ENCODE measurements at regions of chr14 and their contacts with region 1.

Region 1: GRCh38 chr14:68466491-68467032 is 326.3 kb downstream of the ZFP36L1 start:
- DNase-seq: no peak
- H3K4me3 Mint-ChIP-seq: no peak overlapping the region
- H3K27ac Mint-ChIP-seq: no peak overlapping the region
- H3K4me1 Mint-ChIP-seq: peaks cover 33% of the 10 kb centered on the region
- H3K27me3 Mint-ChIP-seq: no peaks in the 10 kb centered on the region

Region 2: DNA sequence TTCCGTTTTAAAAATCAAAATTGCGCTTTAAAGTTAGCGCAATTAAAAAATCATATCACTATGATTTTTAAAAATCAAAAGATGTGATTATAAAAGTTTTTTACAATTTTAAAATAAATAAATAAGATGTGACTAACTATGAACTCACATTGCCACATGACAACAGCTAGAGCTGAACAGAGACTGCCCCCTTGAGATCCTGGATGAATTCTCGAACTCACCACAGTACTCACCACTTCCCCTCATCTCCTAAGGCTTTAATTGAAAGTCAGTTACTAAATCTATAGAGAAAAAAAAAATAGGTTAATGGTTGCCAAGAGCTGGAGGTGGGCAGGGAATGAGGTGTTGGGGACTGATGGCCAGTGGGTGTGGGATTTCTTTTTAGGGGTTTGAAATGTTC is 57.9 kb before region 1 on chr14:
- intact Hi-C with region 1: loop called (anchors 10 kb)
- DNase-seq: no peak
- H3K4me3 Mint-ChIP-seq: no peak overlapping the region
- H3K27ac Mint-ChIP-seq: no peak overlapping the region
- H3K4me1 Mint-ChIP-seq: peaks cover 34% of the 10 kb centered on the region
- H3K27me3 Mint-ChIP-seq: no peaks in the 10 kb centered on the region

Region 3: DNA sequence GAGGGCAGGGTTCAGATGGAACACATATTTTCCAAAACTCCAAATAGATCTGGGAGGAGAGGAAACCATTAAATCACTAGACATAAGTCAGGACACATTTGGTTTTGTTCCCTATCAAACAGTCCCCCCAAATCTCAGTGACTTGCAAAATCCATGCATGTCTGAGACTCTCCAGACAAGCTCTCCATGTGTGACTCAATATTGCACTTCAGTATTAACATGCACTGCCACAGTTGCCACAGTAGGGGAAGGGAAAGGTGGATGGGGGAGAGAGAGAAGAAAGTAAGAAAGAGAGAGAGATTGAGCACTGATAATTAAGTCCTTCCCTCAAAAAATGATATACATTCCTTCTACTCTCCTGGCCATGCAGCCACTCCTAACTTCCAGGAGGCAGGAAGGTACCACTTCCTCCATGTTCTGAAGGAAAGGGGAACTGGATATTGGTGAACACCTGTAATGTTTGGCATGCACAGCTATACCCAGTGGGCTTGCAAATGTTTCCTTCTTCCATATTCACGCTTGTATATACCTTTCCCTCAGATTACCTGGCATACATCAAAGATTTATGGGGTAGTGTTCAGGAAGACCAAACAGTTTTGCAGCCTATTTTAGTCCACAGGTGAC is 16.3 kb after region 1 on chr14:
- intact Hi-C with region 1: loop called (anchors 1 kb)
- DNase-seq: no peak
- H3K4me3 Mint-ChIP-seq: no peak overlapping the region
- H3K27ac Mint-ChIP-seq: peak overlapping the region; percentile 71
- H3K4me1 Mint-ChIP-seq: peaks cover 34% of the 10 kb centered on the region
- H3K27me3 Mint-ChIP-seq: peaks cover 2% of the 10 kb centered on the region

Measured in activated T-helper 1 cell treated with anti-CD3 and anti-CD28 coated beads, Interleukin-12 subunit alpha, Interleukin-12 subunit beta, Interleukin-2, Interleukin-4 antibody, amounts not matched to agents 30 ng/mL and 10 ng/mL and 1 ng/mL, durations not matched to agents 14 hours and 24 hours and 36 hours (primary cell).